Activated T-helper 2 cell treated with anti-CD3 and anti-CD28 coated beads, Interferon-gamma antibody, Interleukin-2, Interleukin-4, amounts not matched to agents 10 μg/mL and 5 μg/mL and 100 μg/mL, durations not matched to agents 14 hours and 24 hours and 36 hours (primary cell): ENCODE measurements at regions of chr15 and their contacts with region 1.

Region 1: DNA sequence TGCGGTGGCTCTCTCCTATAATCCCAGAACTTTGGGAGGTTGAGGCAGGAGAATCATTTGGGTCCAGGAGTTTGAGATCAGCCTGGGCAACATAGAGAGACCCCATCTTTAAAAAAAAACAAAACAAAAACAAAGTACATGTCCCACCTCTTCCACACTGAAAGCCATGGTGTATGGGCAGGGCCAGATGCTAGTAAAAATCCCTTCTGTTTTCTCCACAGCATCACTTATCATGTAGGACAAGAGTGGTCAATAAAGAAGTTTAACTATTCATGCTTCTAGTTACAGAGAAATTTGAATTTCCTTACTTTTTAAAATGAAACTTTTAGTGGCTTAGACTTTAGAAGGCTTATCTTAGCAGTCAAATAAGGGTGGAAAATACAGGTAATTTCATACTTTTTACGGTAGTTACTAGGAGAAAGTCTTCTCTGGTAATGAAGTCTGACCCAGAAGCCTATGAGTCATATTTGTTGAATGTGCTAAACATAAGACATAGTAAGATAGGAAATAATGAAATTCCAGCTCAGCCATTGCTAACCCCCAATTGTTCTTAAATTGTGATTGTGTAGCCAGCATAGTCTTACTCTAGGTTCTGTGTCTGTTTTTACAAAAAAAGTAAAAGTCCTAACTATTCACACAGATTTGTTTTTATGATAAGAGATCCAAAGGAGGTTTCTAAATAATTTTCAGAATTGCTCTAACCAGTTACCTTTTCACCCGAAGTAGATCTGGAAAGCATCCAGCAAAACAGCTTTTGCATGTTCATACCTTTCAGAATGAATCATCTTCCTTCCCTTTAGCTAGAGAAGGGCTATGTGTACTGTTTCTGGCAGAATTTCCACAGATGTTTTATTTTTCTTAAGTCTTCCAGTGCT is 16.4 kb upstream of the ZNF609 start:
- DNase-seq: no peak
- H3K4me3 Mint-ChIP-seq: peak overlapping the region; percentile 77
- H3K27ac Mint-ChIP-seq: peak overlapping the region; percentile 97
- H3K4me1 Mint-ChIP-seq: peaks cover 45% of the 10 kb centered on the region
- H3K27me3 Mint-ChIP-seq: no peaks in the 10 kb centered on the region

Region 2: DNA sequence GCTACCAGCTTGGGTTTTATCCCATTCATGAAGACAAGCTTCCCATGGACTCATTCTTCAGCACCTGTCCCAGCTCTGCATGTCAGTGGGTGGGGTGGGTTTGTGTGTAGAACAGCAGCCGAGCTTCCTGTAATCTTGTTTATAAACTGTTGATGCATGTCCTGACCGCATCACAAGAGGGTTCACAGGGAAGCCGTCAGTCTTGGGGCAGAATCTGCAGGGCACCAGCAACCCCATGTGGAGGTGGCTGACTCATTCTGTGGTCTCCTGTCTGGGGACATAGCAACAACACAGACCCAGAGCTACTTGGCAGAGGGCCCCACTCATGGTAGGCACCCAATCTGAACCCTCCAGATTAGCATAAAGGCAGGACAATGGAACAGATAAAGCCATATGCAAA is 433.3 kb before region 1 on chr15:
- intact Hi-C with region 1: no loop called
- DNase-seq: peak; percentile 80
- H3K4me3 Mint-ChIP-seq: peak overlapping the region; percentile 62
- H3K27ac Mint-ChIP-seq: peak overlapping the region; percentile 88
- H3K4me1 Mint-ChIP-seq: peaks cover 38% of the 10 kb centered on the region
- H3K27me3 Mint-ChIP-seq: no peaks in the 10 kb centered on the region

Region 3: GRCh38 chr15:64387562-64388168 is 56.3 kb before region 1 on chr15 and contains the start of gene TRIP4:
- intact Hi-C with region 1: loop called (anchors 5 kb)
- DNase-seq: peak; percentile 96
- H3K4me3 Mint-ChIP-seq: peak within 1 kb of the TSS; percentile 100
- H3K27ac Mint-ChIP-seq: peak within 1 kb of the TSS; percentile 93
- H3K4me1 Mint-ChIP-seq: peaks cover 14% of the 10 kb centered on the region
- H3K27me3 Mint-ChIP-seq: no peaks in the 10 kb centered on the region
- total RNA-seq, gene TRIP4: 17.9 and 20.7 TPM in 2 replicates

Region 4: DNA sequence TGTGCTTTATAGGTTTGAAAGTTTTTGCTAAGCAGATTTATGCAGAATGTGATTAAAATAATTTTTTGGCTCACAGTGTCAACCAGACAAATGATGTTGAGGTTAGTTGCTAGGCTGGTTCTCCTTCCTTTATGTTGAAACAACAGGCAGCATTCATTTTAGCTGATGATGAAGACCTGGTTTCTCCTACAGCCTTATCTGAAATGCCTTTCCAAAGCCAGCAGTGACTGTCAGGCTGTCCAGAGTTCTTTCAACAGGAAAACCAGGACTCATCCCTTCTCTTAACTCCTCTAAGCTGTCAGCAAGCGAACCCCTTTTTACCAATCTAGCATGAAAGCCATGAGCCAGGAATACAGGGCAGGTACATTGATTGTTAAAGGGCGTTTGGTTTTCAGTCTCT is 100.5 kb after region 1 on chr15:
- intact Hi-C with region 1: no loop called
- DNase-seq: no peak
- H3K4me3 Mint-ChIP-seq: no peak overlapping the region
- H3K27ac Mint-ChIP-seq: no peak overlapping the region
- H3K4me1 Mint-ChIP-seq: peaks cover 24% of the 10 kb centered on the region
- H3K27me3 Mint-ChIP-seq: no peaks in the 10 kb centered on the region